BJ (cell line): ENCODE measurements at regions of chr2 and their contacts with region 1.

Region 1: DNA sequence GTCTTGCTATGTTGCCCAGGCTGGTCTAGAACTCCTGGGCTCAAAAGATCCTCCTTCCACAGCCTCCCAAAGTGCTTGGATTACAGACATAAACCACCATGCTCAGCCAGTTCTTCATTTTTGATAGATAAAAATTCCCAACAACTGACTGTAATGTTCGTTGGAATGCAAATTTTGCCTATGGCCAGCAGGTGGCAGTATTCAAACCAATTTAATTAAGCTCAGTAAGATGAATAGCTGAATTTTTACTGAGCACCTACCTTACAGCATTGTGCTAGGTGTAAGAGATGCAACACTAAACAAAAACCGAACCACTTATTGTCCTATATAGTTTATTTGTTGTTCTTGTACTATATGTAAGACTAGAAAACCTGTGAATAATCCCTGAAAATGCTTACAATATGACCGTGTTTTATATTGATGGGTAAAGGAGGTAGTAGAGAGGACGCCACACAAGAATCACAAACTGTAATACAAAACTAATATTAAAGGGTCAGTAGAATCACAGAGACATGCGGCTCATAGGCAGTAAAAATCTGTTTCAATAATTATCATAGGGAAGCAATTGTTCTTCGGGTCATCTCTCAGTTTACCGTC is 8.2 kb upstream of the TMEM182 start:
- DNase-seq: no peak
- H3K4me3 ChIP-seq: no peak overlapping the region
- H3K27me3 ChIP-seq: no peaks in the 10 kb centered on the region
- CTCF ChIP-seq: peak; percentile 76

Region 2: GRCh38 chr2:102736410-102737409 is 17.0 kb before region 1 on chr2:
- CTCF ChIA-PET with region 1: interaction called, 23 read pairs
- POLR2A ChIA-PET with region 1: no interaction called
- DNase-seq: no peak
- H3K4me3 ChIP-seq: peak overlapping the region; percentile 79
- H3K27me3 ChIP-seq: no peaks in the 10 kb centered on the region
- CTCF ChIP-seq: peak; percentile 40; the same call in 1 of the 2 replicates

Region 3: DNA sequence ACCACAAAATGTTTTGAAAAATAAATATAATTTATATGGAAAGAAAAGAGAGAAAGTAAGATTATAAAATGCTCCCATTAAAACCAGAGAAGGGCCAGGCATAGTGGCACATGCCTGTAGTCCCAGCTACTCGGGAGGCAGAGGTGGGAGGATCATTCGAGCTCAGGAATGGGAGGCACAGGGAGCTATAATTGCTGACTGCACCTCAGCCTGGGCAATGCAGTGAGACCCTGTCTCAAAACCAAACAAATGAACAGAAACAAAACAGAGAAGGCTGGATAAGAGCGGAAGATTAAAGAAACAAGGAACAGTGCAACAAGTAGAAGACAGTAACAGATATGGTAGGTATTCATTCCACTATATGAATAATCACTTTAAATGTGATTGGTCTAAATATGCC is 10.4 kb before region 1 on chr2:
- CTCF ChIA-PET with region 1: interaction called, 23 read pairs
- POLR2A ChIA-PET with region 1: no interaction called
- DNase-seq: no peak
- H3K4me3 ChIP-seq: no peak overlapping the region
- H3K27me3 ChIP-seq: no peaks in the 10 kb centered on the region
- CTCF ChIP-seq: no peak